Psoas muscle (tissue), 8 donors: ENCODE measurements at regions of chr5 and their contacts with region 1.

Region 1: DNA sequence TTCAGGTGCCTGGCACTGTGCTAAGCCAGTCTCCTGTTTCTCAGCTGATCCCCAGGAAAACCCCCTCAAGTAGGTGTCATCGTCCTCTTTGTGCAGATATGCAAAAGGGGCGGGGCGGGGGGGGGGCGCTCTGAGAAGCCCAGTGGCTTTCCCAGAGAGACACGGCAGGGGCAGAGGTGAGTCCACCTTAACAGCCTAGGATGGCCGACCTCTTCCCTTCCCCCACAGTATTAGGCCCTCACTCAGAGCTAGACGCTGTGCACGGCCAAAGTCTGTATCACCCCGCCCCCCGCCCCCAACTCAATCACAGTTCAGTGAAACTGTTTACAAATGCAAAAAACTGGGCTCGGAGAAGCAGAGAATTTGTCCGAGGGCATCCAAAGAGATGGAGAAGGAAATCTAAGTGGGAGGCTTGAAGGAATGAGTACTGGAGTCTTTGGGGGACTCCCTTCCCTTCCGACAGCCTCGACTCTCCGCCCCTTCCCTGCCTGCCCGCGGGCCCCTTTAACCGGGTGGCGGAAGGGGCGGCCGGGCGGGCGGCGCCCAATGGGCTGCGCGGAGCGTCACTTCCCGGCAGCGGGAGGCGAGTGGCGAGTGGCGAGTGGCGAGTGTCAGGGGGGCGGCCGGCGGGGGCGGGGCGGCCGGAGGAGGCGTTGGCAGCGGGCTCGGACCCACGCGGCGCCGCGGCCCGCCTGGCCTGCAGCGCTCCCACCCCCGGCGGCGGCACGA is at the start of gene ERGIC1:
- DNase-seq: peak; percentile 91 to 94
- ATAC-seq: peak; percentile 90 to 97 (median 92)
- H3K4me3 ChIP-seq: peak within 1 kb of the TSS; percentile 88
- H3K27ac ChIP-seq: peak within 1 kb of the TSS; percentile 82
- H3K4me1 ChIP-seq: peaks cover 40% of the 10 kb centered on the region
- H3K27me3 ChIP-seq: no peaks in the 10 kb centered on the region
- CTCF ChIP-seq: no peak
- total RNA-seq, gene ERGIC1: 49.9 to 86.5 (median 53.7) TPM

Region 2: GRCh38 chr5:172777881-172778814 is 55.7 kb before region 1 on chr5:
- intact Hi-C with region 1: no loop called
- DNase-seq: peak; percentile 57 to 59
- ATAC-seq: peak; percentile 48 to 57 (median 55)
- H3K4me3 ChIP-seq: no peak overlapping the region
- H3K27ac ChIP-seq: peak overlapping the region; percentile 79
- H3K4me1 ChIP-seq: peaks cover 36% of the 10 kb centered on the region
- H3K27me3 ChIP-seq: no peaks in the 10 kb centered on the region
- CTCF ChIP-seq: no peak

Region 3: DNA sequence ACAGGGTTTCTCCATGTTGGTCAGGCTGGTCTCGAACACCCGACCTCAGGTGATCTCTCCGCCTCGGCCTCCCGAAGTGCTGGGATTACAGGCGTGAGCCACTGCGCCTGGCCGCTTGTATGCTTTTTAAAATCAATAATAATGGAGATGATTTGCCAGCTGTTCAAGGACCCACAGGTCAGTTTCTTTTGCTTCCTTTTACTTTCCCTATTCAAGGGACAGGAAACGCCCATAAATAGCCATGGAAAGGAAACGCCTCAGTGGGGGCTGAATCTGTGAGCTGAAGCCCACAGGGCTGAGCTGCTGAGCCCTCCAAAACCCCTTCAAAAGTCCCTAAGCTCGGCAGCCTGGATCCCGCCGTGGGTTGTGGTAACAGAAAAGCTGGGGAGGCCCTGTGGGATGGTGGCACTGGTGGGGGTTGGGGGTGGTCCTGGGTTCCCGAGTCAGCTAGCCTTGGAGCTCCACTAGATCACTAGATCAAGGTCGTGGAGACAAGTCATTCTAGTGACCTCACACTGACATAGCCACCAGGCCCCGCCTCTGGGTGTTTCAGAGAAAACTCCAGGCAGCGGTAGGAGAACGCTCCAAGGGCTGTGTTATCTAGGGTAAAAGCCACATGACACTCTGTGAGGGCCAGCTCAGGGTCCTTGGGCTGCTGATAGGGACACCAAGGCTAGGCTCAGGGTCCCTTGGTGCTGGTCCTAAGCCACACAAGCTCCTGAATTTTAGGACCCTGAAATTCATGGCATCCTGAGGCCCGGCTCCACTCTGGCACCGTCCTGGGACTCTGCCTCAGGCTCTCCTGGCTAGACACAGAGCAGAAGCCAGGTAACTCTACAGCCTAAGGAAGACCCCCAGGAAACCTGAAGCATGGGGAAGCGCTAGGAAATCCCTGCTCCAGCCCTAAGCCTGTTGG is 44.8 kb before region 1 on chr5:
- intact Hi-C with region 1: loop called in 1 of 2 experiments (anchors 5 kb)
- DNase-seq: peak in 1 of 2 donors; percentile 83
- ATAC-seq: peak in 2 of 4 donors; percentile 22 to 36
- H3K4me3 ChIP-seq: peak overlapping the region; percentile 22
- H3K27ac ChIP-seq: peak overlapping the region; percentile 74
- H3K4me1 ChIP-seq: peaks cover 61% of the 10 kb centered on the region
- H3K27me3 ChIP-seq: no peaks in the 10 kb centered on the region
- CTCF ChIP-seq: no peak